B cell (primary cell): ENCODE measurements at regions of chr10 and their contacts with region 1.

Region 1: DNA sequence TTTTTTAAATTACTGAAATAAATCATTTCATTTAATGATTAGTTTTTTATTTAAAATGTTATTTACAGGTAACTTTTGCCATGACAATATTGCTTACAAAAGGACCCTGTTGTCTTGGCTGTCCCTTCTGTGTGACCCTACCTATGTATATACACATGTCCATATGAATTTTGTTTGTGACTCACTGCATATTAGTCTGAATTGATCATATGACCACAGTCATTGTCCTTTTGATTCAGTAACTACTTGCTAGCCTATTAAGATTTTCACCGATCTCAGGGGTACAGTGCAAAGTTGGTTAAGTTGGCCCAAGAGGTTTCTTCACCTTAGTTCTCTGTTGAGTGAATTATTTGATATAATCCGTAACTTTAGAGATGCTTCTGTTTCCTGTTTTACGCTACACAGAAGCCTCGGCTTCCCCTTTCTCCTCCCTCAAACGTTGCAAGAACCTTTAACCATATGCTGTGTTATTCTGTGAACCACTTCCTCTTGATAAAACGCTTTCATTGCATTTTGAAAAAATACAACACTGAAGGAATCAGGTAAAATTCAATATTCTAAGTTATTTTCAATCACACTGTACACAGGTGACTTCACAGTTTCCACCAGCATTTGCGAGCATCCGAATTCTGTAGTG is 43.9 kb downstream of the APBB1IP start:
- DNase-seq: peak; percentile 85
- ATAC-seq: peak; percentile 78
- H3K4me3 ChIP-seq: peak overlapping the region in 4 of 5 experiments; percentile 11 to 58 (median 17)
- H3K4me3 Mint-ChIP-seq: peak overlapping the region; percentile 54
- H3K27ac ChIP-seq: peak overlapping the region; percentile 62 to 86
- H3K27ac Mint-ChIP-seq: peak overlapping the region; percentile 78
- H3K4me1 ChIP-seq: peaks cover 75 to 79% of the 10 kb centered on the region in 2 donors
- H3K4me1 Mint-ChIP-seq: peaks cover 71% of the 10 kb centered on the region
- H3K27me3 ChIP-seq: no peaks in the 10 kb centered on the region
- H3K27me3 Mint-ChIP-seq: no peaks in the 10 kb centered on the region
- CTCF ChIP-seq: no peak

Region 2: GRCh38 chr10:26437637-26438461 is 44.2 kb before region 1 on chr10 and contains the start of gene APBB1IP:
- CTCF ChIA-PET with region 1: interaction called, 4 read pairs
- POLR2A ChIA-PET with region 1: interaction called, 4 read pairs
- intact Hi-C with region 1: loop called (anchors 1 kb)
- DNase-seq: peak; percentile 81
- ATAC-seq: peak; percentile 82
- H3K4me3 ChIP-seq: peak within 1 kb of the TSS; percentile 73 to 89 (median 86)
- H3K4me3 Mint-ChIP-seq: peak within 1 kb of the TSS; percentile 95
- H3K27ac ChIP-seq: peak within 1 kb of the TSS; percentile 82 to 83
- H3K27ac Mint-ChIP-seq: peak within 1 kb of the TSS; percentile 99
- H3K4me1 ChIP-seq: peaks cover 31 to 44% of the 10 kb centered on the region in 2 donors
- H3K4me1 Mint-ChIP-seq: peaks cover 49% of the 10 kb centered on the region
- H3K27me3 ChIP-seq: no peaks in the 10 kb centered on the region
- H3K27me3 Mint-ChIP-seq: no peaks in the 10 kb centered on the region
- CTCF ChIP-seq: no peak
- total RNA-seq, gene APBB1IP: 97.0 and 99.8 TPM in 2 replicates

Region 3: DNA sequence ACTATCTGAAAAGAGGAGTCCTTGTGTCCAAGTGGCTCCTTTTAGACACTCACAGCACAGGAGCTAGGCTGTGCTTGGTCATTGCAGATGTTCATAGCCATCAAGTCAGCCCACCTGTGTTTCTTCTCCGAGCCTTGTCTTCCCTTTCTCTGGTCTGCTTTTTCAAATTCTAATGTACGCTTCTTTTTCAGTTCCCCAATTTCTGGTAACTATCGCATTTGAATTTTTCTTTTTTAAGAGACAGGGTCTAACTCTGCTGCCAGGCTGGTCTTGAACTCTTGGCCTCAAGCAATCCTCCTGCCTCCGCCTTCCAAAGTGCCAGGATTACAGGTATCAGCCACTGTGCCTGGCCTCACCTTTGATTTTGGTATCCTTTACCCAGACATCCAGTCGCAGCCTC is 24.9 kb before region 1 on chr10:
- CTCF ChIA-PET with region 1: interaction called, 4 read pairs
- POLR2A ChIA-PET with region 1: interaction called, 3 read pairs
- intact Hi-C with region 1: loop called (anchors 2 kb)
- DNase-seq: peak; percentile 76
- ATAC-seq: peak; percentile 94
- H3K4me3 ChIP-seq: peak overlapping the region in 1 of 5 experiments; percentile 26
- H3K4me3 Mint-ChIP-seq: peak overlapping the region; percentile 82
- H3K27ac ChIP-seq: peak overlapping the region; percentile 78 to 85
- H3K27ac Mint-ChIP-seq: peak overlapping the region; percentile 97
- H3K4me1 ChIP-seq: peaks cover 51 to 54% of the 10 kb centered on the region in 2 donors
- H3K4me1 Mint-ChIP-seq: peaks cover 71% of the 10 kb centered on the region
- H3K27me3 ChIP-seq: no peaks in the 10 kb centered on the region
- H3K27me3 Mint-ChIP-seq: no peaks in the 10 kb centered on the region
- CTCF ChIP-seq: no peak

Region 4: DNA sequence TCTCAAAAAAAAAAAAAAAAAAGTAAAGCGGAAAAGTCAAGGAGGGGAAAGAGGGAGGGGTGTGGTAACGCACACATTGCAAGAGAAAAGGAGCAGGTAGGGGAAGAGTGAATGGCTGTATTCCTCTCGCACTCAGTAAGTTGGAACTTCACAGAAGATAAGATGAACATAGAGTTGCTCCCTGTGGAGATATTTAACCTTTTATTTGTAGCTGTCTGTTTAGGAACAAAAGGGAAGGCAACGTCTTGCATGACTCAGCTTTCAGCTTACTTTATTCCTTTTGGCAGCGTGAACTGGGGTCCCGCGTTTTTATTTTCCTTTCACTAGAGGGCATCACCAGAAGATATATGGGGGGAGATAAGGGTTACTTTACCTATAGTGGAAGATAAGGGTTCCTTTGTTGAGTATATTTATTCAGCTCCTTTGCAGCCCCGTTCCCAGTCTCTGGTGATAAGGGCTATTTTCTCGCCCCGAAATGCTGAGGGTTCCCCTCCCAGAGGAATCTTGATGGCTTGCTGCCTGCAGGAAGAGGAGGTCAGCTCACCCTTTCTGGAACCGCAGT is 34.6 kb after region 1 on chr10:
- CTCF ChIA-PET with region 1: no interaction called
- POLR2A ChIA-PET with region 1: no interaction called
- intact Hi-C with region 1: loop called (anchors 5 kb)
- DNase-seq: no peak
- ATAC-seq: no peak
- H3K4me3 ChIP-seq: no peak overlapping the region
- H3K4me3 Mint-ChIP-seq: no peak overlapping the region
- H3K27ac ChIP-seq: peak overlapping the region in 1 of 2 donors; percentile 44
- H3K27ac Mint-ChIP-seq: no peak overlapping the region
- H3K4me1 ChIP-seq: peaks cover 0 to 10% of the 10 kb centered on the region in 2 donors
- H3K4me1 Mint-ChIP-seq: peaks cover 14% of the 10 kb centered on the region
- H3K27me3 ChIP-seq: no peaks in the 10 kb centered on the region
- H3K27me3 Mint-ChIP-seq: no peaks in the 10 kb centered on the region
- CTCF ChIP-seq: no peak

Region 5: DNA sequence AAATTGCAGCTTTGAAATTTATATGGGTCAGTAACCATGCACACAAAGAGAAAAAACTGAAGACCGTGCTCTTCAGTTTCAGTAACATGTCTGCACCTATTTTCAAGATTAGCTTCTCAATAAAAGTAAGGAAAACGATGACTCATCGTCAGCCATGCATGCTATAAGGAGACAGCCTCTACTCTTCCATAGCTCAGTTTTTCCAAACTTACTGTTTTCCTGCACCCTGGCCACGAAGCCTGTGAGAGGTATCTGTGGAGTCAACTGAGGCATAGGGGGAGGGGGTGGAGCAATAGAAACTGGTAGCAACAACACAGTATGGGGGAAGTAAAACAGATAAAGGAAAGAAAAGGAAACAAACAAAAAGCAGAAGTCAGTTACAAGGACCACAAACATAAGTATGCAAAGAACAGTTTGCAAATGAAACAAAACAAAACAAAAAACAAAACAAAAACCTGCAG is 273.4 kb after region 1 on chr10:
- CTCF ChIA-PET with region 1: no interaction called
- POLR2A ChIA-PET with region 1: no interaction called
- intact Hi-C with region 1: no loop called
- DNase-seq: peak; percentile 69
- ATAC-seq: peak; percentile 74
- H3K4me3 ChIP-seq: peak overlapping the region in 1 of 5 experiments; percentile 30
- H3K4me3 Mint-ChIP-seq: peak overlapping the region; percentile 51
- H3K27ac ChIP-seq: peak overlapping the region; percentile 1 to 28
- H3K27ac Mint-ChIP-seq: peak overlapping the region; percentile 84
- H3K4me1 ChIP-seq: peaks cover 7 to 12% of the 10 kb centered on the region in 2 donors
- H3K4me1 Mint-ChIP-seq: peaks cover 20% of the 10 kb centered on the region
- H3K27me3 ChIP-seq: no peaks in the 10 kb centered on the region
- H3K27me3 Mint-ChIP-seq: no peaks in the 10 kb centered on the region
- CTCF ChIP-seq: no peak